Left ventricle myocardium superior (tissue), 1 donor: ENCODE measurements at regions of chr14 and their contacts with region 1.

Region 1: DNA sequence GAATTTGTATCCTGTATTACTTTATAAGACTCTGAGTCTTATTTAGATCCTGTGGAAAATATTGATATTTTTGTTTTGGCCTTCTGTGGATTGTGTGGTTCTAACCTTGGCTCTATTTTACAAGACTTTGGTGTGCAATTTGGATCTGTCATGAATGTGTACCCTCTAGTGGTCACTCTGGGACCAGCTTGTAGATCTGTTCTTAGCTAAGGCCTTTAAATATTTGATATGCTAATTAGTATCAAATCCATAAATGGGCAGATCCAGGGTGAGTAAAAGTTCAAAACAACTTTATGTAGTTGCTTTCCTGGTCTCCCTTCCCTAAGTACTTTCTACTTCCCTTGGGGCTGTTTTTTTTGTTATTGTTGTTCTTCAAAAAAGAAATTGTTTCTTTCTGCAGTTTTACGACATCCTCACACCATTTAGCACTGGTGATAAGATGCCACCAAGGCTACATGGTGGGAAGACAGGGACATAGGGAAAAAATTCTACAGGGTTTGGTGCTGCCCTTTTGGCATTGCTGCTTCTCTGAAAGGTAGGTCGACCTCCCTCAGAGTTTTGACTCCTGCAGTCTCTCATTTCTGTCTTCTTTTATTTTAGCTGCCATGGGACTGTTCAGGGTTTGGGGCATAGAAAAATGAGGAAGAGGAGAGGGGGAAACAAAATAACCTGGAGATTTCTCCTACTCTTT is 238.5 kb downstream of the GPHN start:
- DNase-seq: no peak
- ATAC-seq: peak; percentile 50

Region 2: DNA sequence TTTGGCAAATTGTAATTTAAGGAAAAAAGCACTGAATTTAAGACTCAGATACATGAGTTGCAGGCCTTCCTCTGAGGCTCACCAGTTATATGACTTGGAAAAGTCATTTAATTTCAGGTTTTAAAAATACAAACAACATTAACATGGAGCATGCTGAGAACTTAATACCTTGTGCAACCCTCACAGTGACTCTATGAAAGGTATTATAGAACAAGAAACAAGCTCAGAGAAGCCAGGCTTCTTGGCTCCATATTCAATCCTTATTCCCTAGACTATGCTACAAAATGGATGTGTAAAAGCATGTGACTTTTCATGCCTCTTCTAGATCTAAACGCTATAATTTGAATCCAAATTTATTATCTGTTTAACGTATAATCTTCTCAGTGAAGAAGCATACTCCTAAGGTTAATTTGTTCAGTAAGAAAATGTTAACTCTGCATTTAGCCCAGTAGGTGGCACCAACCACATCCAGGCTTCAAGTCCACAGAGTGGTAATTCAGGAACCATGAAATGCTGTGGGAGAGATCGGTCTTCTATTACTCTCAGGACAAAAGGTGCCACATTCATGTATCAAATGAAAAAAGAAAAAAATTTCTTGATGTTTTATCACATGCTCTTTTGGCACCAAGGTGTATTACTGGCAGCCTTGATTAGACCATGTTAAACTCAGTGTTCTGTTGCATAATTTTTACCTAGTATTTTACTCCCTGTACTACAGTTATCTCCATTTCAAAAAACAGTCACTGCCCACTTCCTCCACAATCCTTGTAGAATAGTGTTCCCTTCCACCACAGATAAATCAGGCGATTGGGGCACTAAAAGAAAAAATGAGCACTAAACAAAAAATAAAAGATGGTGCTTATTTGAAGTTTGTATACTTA is 251.0 kb before region 1 on chr14:
- intact Hi-C with region 1: loop called (anchors 10 kb)
- DNase-seq: no peak
- ATAC-seq: peak; percentile 94

Region 3: DNA sequence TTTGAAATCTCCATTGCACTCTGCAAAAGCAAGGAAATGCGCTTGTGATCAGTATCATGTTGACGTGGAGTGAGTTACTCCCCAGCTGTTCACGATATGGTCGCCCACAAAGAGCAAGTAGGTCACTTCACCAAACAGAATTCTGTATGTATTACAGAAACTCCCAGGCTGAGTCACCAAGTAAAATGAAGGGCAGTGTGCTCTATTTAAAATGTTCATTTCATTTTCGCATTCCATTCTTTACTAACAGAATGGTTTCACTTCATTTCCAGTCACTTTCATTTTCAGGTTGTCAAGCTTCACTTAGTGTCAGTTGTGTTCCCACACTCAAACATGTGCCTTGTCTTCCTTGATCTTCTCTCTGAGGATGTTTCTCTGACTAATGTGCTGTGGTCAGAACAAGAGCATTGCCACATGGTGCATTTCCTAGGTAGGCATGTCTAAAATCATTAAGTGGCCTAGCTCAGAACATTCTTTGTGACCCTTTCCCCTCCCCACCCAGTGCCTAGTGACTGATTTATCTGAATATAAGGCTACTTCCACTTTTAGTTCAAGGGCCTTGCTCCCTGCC is 1464.4 kb after region 1 on chr14:
- intact Hi-C with region 1: no loop called
- DNase-seq: no peak
- ATAC-seq: peak; percentile 86